ENCODE measurements at regions of chr13 and their contacts with region 1.

Region 1: DNA sequence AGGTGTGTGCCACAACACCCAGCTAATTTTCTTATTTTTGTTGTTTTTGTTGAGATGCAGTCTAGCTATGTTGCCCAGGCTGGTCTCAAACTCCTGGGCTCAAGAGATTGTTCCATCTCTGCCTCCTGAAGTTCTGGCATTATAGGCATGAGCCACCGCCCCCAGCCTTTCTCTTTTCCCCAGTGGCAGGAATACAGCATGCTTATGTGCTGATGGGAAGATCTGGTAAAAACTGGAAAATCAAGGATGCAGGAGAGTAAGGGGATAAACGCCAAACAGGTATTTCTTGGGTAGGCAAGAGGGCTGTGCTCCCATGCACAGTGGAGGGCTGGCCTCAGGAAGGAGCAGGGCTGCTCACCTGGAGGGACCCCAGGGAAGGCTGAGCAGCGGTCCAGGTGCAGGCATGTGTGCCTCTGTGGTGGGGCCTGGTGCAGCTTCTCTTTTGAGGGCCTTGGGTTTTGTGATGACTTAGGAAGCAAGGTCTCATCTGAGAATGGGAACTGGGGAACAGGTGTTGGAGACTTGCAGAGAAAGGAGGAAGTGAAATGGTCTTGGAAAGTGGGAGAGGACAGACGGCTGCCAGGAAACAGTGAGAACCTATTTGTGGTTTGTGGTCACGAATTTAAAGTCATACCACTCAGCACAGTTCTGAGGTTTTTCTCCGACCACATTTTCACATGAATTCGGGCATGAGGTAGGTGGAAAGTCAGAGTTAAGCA is 106.5 kb downstream of the TEX26 start:
- DNase-seq: no peak
- H3K4me3 ChIP-seq: no peak overlapping the region
- H3K27ac ChIP-seq: no peak overlapping the region
- H3K4me1 ChIP-seq: no peaks in the 10 kb centered on the region
- H3K27me3 ChIP-seq: no peaks in the 10 kb centered on the region
- CTCF ChIP-seq: no peak
- EP300 ChIP-seq: no peak
- POLR2A ChIP-seq: no peak

Region 2: DNA sequence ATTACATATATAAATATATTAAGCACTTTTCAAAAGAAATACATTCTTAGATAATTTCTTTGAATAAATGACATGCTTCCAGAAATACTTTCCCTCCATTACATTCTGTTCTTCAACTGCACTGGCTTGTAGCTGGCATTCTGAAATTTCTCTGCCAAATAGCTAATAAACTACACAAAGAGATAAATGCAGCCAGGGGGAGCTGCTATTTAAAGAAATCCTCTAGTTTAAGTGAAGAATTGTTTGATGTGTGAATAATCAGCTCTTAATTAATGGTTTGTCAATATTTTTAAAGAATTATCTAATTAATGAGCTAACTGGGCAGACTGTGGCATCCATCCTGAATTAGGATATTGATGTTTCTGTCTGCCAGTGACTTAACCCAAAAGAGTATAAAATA is 1474.2 kb before region 1 on chr13:
- intact Hi-C with region 1: loop called in 1 of 4 experiments (anchors 10 kb)
- DNase-seq: no peak
- H3K4me3 ChIP-seq: no peak overlapping the region
- H3K27ac ChIP-seq: no peak overlapping the region
- H3K4me1 ChIP-seq: no peaks in the 10 kb centered on the region
- H3K27me3 ChIP-seq: no peaks in the 10 kb centered on the region
- CTCF ChIP-seq: no peak
- EP300 ChIP-seq: no peak
- POLR2A ChIP-seq: no peak

Region 3: DNA sequence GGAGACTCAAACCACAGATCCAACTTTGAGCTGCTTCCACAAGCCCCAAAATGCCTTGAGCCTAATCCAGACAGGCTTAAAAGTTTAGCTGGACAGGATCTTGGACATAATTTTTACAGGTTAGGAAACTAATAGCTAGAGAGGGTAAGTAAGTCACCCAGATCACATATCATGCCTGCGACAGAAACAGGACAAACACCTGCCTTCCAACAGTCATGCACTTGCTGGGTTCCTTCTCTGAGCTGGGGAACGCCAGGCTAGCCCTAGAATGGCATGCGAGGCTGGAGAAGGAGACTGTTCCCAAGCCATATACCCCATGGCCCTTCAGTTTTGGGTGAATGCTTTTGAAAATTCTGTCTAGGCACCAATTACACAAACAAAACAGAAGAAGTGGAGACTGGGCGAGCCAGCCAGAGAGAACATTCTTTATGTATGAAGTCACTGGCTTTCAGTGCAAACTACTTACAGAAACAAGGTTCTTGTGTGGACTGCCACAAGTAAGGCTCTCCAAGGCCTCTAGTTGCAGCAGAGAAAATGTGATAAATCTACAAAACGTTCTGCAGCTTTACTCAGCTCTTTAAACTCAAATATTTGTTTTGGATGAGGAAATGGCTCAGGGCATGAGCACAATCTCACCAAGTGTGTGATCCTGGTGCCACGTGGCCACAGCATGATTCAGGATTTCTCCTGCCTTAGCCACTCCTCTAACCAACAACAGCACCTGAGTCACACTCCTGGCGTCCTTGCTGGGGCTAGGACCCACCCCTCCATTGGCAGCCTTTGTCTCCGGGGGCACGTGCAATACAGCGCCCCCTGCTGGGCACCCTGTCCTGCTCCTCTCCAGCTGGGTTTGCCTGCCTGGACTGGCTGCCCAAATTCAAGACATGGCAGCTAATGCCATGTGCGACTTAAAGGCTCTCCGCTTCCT is 1115.2 kb before region 1 on chr13:
- intact Hi-C with region 1: no loop called
- DNase-seq: peak; percentile 43 to 76 (median 65)
- H3K4me3 ChIP-seq: no peak overlapping the region
- H3K27ac ChIP-seq: peak overlapping the region in 1 of 2 donors; percentile 8
- H3K4me1 ChIP-seq: peaks cover 17% of the 10 kb centered on the region
- H3K27me3 ChIP-seq: no peaks in the 10 kb centered on the region
- CTCF ChIP-seq: peak; percentile 24 to 44 (median 36)
- EP300 ChIP-seq: no peak
- POLR2A ChIP-seq: no peak

Region 4: GRCh38 chr13:30998136-30999088 is 40.6 kb before region 1 on chr13:
- intact Hi-C with region 1: no loop called
- DNase-seq: peak in 1 of 5 donors; percentile 47
- H3K4me3 ChIP-seq: no peak overlapping the region
- H3K27ac ChIP-seq: no peak overlapping the region
- H3K4me1 ChIP-seq: no peaks in the 10 kb centered on the region
- H3K27me3 ChIP-seq: no peaks in the 10 kb centered on the region
- CTCF ChIP-seq: no peak
- EP300 ChIP-seq: no peak
- POLR2A ChIP-seq: no peak

Region 5: GRCh38 chr13:31090991-31091531 is 52.1 kb after region 1 on chr13:
- intact Hi-C with region 1: no loop called
- DNase-seq: no peak
- H3K4me3 ChIP-seq: no peak overlapping the region
- H3K27ac ChIP-seq: no peak overlapping the region
- H3K4me1 ChIP-seq: no peaks in the 10 kb centered on the region
- H3K27me3 ChIP-seq: no peaks in the 10 kb centered on the region
- CTCF ChIP-seq: no peak
- EP300 ChIP-seq: no peak
- POLR2A ChIP-seq: no peak